ENCODE measurements at regions of chr14 and their contacts with region 1.

Region 1: GRCh38 chr14:57287745-57288144 is 19.0 kb downstream of the AP5M1 start:
- DNase-seq: no peak
- ATAC-seq: no peak
- H3K4me3 ChIP-seq: no peak overlapping the region
- H3K4me3 Mint-ChIP-seq: no peak overlapping the region
- H3K27ac ChIP-seq: no peak overlapping the region
- H3K27ac Mint-ChIP-seq: no peak overlapping the region
- H3K4me1 ChIP-seq: no peaks in the 10 kb centered on the region
- H3K4me1 Mint-ChIP-seq: no peaks in the 10 kb centered on the region
- H3K27me3 ChIP-seq: no peaks in the 10 kb centered on the region
- H3K27me3 Mint-ChIP-seq: no peaks in the 10 kb centered on the region

Region 2: DNA sequence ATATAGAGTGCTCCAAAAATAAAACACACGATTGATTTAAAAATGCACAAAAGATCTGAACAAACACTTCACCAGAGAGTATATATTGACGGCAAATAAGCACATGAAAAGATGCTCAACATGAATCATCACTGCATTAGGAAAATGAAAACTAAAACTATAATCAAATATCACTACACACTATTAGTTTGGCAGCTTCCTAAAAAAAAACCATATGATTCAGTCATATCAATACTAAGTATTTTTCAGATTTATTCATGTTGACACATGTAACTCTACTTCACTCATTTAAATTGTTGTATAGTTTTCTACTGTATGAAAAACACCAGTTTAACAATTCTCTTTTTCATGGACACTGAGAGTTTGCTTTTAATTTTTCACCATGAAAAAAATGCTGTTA is 60.7 kb before region 1 on chr14:
- CTCF ChIA-PET with region 1: no interaction called
- POLR2A ChIA-PET with region 1: no interaction called
- intact Hi-C with region 1: loop called in 1 of 2 experiments (anchors 5 kb)
- DNase-seq: no peak
- ATAC-seq: no peak
- H3K4me3 ChIP-seq: no peak overlapping the region
- H3K4me3 Mint-ChIP-seq: no peak overlapping the region
- H3K27ac ChIP-seq: no peak overlapping the region
- H3K27ac Mint-ChIP-seq: peak overlapping the region in 1 of 9 donors; percentile 29
- H3K4me1 ChIP-seq: no peaks in the 10 kb centered on the region
- H3K4me1 Mint-ChIP-seq: peaks cover 0 to 6% (median 0%) of the 10 kb centered on the region in 7 donors
- H3K27me3 ChIP-seq: no peaks in the 10 kb centered on the region
- H3K27me3 Mint-ChIP-seq: no peaks in the 10 kb centered on the region

Measured in naive thymus-derived CD4-positive, alpha-beta T cell (primary cell).